Dendritic cell treated with granulocyte-macrophage colony-stimulating factor and Interleukin-4, amounts not matched to agents 40 ng/mL and 50 ng/mL, for 4 days (primary cell): ENCODE measurements at regions of chr7 and their contacts with region 1.

Region 1: GRCh38 chr7:92245487-92246362 is at the starts of genes ANKIB1 and KRIT1:
- H3K4me3 Mint-ChIP-seq: peak within 1 kb of the TSS; percentile 87
- H3K27ac Mint-ChIP-seq: peak within 1 kb of the TSS; percentile 97
- H3K4me1 Mint-ChIP-seq: peaks cover 27% of the 10 kb centered on the region
- H3K27me3 Mint-ChIP-seq: no peaks in the 10 kb centered on the region

Region 2: GRCh38 chr7:91940572-91941341 is 305.0 kb before region 1 on chr7 and contains the start of gene AKAP9:
- intact Hi-C with region 1: loop called (anchors 5 kb)
- H3K4me3 Mint-ChIP-seq: peak within 1 kb of the TSS; percentile 98
- H3K27ac Mint-ChIP-seq: peak within 1 kb of the TSS; percentile 97
- H3K4me1 Mint-ChIP-seq: peaks cover 35% of the 10 kb centered on the region
- H3K27me3 Mint-ChIP-seq: peaks cover 2% of the 10 kb centered on the region

Region 3: DNA sequence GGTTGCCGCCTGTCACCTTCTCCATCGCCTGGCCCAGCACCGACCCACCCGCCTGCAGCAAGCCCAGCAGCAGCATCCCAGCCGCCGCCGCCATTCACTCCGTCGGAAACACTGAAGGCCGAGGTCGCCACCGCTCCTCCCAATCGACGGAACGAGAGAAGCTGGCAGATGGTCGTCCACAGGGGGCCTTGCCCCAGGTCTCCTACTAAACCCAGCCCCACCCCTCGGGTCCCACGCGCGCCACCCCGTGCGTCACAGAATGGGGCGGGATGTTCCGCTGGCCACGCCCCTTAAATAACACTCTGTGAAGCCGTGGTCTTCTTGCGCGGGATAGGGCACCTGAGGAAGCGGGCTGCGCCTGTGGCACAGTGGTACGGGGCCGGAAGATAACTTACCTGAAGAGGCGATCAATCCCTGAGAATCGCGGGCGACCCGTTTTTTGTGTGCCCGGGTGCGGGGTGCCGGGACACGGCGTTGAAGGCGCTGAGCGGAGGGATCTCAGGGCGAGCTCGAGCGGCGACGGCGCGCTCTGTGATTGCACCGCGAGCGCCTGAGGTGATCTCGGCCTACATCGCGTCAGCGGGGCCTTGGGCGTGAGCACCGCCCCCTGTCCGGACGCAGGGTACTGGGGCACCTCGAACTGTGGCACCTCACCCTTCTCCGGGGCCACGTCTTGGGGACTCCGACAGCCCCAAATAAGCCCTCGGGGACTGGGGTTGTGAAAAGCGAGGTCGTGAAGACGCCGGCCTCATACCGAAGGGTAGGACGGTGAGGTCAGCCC is 111.3 kb before region 1 on chr7 and contains the start of gene CYP51A1:
- intact Hi-C with region 1: loop called (anchors 2 kb)
- H3K4me3 Mint-ChIP-seq: peak within 1 kb of the TSS; percentile 98
- H3K27ac Mint-ChIP-seq: peak within 1 kb of the TSS; percentile 99
- H3K4me1 Mint-ChIP-seq: peaks cover 34% of the 10 kb centered on the region
- H3K27me3 Mint-ChIP-seq: peaks cover 7% of the 10 kb centered on the region

Region 4: DNA sequence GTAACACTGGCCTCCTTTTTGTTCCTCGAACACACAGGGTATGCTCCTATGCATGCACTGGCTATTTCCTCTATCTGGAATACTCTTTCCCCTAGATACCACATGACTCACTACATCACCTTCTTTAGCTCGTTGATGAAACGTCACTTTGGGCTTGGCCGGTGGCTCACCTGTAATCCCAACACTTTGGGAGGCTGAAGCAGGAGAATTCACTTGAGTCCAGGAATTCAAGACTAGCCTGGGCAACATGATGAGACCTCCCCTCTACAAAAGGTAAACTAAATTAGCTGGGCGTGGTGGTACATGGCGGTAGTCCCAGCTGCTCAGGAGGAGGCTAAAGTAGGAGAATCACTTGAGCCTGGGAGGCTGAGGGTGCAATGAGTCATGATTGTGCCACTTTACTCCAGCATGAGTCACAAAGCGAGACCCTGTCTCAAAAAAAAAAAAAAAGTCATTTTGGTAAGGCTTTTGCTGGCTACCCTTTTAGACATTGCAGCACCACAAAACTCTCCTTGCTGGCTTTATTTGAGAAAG is 14.6 kb after region 1 on chr7:
- intact Hi-C with region 1: no loop called
- H3K4me3 Mint-ChIP-seq: no peak overlapping the region
- H3K27ac Mint-ChIP-seq: no peak overlapping the region
- H3K4me1 Mint-ChIP-seq: peaks cover 10% of the 10 kb centered on the region
- H3K27me3 Mint-ChIP-seq: no peaks in the 10 kb centered on the region

Region 5: DNA sequence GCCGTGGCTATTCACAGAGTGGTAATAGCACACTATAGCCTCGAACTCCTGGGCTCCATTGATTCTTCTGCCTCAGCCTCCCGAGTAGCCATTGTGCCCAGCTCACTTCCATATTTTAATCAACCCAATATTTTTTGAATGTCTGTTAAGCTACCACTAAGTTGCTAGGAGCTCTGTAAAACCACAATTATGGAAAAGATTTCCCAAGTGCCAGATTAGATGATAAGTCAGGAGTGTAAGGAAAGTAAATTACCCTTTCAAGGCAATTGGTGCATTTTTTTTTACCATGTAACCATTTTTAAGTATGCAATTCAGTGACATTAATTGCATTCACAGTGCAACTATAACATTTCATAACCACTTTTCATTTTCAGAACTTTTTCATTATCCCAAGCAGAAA is 114.1 kb after region 1 on chr7:
- intact Hi-C with region 1: no loop called
- H3K4me3 Mint-ChIP-seq: no peak overlapping the region
- H3K27ac Mint-ChIP-seq: no peak overlapping the region
- H3K4me1 Mint-ChIP-seq: peaks cover 7% of the 10 kb centered on the region
- H3K27me3 Mint-ChIP-seq: no peaks in the 10 kb centered on the region

Region 6: DNA sequence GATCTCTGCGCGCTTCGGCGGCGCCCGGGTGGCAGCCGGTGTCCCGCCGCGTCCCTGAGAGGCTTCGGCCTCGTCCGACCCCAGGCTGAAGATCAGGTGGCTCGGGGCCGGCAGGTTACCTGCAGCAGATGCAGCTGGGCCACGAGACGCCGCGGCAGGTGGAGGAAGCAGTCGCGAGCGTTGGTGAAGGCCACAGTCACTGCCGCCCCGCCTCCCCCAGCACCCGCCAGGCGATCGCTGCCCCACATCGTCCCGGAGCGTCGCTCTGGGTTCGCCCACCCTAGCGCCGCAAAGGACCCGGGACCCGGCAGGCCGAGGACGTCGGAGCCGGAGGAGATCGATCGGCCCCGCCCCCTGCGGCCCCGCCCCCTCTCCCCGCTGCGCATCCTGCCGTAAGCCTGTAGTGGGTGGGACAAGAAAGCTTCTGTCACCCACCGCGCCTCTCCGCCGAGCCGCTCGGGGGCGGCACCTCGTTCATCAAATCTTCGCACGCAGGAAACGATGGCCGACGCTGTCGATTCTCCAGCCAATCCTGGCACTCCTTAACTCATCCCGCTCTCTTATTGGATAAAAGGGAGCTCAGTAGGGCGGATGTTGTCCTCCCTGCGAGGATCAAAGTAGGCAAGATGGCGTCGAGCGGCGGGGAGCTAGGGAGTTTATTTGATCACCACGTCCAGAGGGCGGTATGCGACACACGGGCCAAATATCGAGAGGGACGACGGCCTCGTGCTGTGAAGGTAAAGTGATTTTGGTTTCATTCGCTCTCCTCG is 282.6 kb after region 1 on chr7 and contains the starts of genes PEX1 and RBM48:
- intact Hi-C with region 1: loop called (anchors 5 kb)
- H3K4me3 Mint-ChIP-seq: peak within 1 kb of the TSS; percentile 88
- H3K27ac Mint-ChIP-seq: peak within 1 kb of the TSS; percentile 88
- H3K4me1 Mint-ChIP-seq: peaks cover 20% of the 10 kb centered on the region
- H3K27me3 Mint-ChIP-seq: no peaks in the 10 kb centered on the region

Region 7: GRCh38 chr7:92584996-92585395 is 339.3 kb after region 1 on chr7:
- intact Hi-C with region 1: loop called (anchors 5 kb)
- H3K4me3 Mint-ChIP-seq: no peak overlapping the region
- H3K27ac Mint-ChIP-seq: no peak overlapping the region
- H3K4me1 Mint-ChIP-seq: peaks cover 29% of the 10 kb centered on the region
- H3K27me3 Mint-ChIP-seq: no peaks in the 10 kb centered on the region